Posterior cingulate gyrus (tissue), 11 donors: ENCODE measurements at regions of chrX and their contacts with region 1.

Region 1: DNA sequence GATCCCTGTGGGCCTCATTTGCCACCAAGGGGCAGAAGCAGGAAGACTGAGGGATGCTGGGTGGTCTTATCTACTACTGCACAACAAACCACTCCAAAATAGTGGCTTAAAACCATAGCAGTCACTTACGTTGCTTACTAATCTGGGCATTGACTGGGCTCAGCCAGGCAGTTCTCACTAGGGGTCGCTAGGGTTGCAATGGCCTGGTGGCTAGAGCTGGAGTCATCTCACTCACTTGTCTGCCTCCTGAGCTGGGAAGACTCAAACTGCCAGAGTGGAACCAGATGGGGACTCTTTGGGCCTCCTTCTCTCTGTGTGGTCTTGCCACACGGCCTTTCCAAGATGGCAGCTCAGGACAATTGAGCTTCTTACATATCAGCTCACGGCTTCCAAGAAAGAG is 216.3 kb upstream of the BCOR start:
- DNase-seq: peak in 3 of 10 donors; percentile 8 to 48 (median 30)

Region 2: GRCh38 chrX:39652336-39653131 is 661.5 kb before region 1 on chrX:
- intact Hi-C with region 1: no loop called
- DNase-seq: peak in 2 of 10 donors; percentile 33 to 41

Region 3: DNA sequence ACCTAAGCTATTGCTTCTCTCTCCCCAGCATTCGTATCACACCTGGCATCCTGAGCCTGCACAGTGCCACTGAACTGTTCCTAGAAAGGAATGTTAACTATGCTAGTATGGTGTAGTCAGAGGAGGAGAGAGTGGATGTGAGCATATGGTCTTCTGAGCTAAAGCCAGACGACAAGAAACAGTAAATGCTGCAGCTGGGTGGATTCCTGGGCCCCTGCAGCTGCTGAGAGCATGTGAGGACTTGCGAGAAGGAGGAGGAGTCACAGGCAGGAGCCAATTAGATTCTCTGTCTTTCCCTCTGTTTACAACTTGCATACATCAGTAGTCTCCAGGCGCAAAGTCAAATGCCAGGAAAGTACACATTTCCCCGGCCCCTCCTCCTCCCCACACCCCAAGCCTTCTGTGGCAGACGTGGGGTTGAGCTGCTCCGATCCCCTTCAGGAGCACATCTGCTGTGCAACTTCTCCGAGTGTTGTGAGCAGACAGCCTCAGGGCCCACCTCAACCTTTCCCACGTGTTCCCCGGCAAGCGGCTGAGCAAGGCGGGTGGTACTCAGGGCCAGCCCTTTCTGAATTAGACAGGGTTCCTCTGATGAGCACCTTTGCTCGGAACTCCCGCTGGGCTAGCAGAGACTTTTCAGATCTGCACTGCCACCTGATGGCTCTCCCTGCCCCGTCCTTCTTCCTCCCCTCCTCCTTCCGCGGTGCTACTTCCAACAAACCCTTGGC is 158.0 kb after region 1 on chrX:
- intact Hi-C with region 1: loop called (anchors 5 kb)
- DNase-seq: peak in 8 of 10 donors; percentile 12 to 89 (median 34)

Region 4: DNA sequence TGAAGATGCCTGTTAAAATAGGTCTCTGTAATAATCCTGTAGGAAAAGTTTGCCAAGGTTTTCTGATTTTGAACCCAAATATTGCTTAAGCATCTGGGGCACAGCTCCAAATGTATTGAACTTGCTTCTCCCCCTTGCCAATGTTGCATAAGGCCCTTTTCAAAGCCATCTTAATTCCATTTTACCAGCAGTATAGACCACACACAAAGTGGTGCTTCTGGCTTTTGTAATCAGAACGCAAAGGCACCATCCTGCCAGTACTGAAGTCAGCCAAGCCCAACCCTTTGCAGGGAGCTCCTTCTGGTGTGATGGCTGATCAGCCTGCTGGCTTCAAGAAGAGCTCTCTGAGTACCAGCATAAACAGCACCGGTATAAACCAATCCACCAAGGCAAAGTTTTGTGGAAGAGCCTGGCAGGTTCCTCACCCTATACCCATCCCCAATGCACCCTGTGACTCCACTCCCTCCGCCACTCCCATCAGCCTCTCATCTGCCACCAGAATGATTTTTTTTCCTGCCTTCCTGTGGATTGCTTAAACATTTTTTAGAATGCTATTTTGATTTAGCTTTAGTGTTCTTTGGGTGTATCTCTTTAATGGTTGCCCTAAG is 732.0 kb after region 1 on chrX:
- intact Hi-C with region 1: no loop called
- DNase-seq: no peak

Region 5: DNA sequence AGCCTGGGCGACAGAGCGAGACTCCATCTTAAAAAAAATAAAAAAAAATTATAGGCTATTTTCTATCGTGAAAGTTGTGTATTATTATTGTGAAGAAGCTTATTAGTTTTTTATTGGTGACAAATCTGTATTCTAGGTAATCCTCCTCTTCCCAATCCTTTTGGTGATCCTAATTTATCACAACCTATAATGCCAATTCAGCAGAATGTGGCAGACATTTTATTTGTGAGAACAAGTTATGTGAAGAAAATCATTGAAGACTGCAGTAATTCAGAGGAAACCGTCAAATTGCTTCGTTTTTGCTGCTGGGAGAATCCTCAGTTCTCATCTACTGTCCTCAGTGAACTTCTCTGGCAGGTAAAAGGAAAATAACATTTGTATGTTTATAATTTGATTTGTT is 910.5 kb after region 1 on chrX:
- intact Hi-C with region 1: no loop called
- DNase-seq: no peak